Caco-2 (cell line): ENCODE measurements at regions of chr15 and their contacts with region 1.

Region 1: DNA sequence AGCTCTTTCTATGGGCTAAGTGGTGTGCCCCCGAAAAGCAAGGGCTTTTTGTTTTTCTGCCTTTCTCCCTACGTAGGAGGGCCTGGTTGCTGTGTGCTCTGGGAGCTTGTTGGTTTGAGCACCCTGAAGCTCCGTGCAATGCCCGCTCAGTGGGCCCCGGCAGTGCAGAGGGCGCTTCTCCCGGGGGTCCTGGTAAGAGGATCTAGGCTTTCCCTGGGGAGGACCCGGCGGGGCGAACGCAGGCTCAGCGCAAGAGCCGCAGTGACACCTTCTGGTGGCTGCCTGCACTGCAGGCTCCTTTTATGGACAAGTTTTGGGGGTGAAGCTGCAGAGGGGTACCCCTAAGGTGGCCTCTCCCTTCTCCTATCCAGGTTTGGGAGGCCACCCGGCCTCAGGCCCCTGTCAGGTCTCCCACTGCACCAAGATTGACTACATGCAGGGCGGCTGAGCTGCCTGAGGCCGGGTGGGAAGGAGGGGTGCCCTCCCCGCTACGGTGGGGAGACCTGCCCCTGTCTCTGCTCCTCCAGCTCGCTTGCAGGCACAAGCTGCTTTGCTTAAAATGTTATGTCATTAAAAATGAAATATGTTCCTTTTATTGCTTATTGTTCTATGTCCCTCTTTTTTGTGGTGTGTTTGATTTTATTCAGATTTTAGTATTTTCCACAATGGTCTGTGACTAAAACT is 387.9 kb downstream of the GABRG3 start:
- DNase-seq: peak in 1 of 2 experiments; percentile 11
- H3K4me3 ChIP-seq: no peak overlapping the region
- H3K4me3 Mint-ChIP-seq: no peak overlapping the region
- H3K27ac Mint-ChIP-seq: no peak overlapping the region
- H3K4me1 ChIP-seq: no peaks in the 10 kb centered on the region
- H3K4me1 Mint-ChIP-seq: no peaks in the 10 kb centered on the region
- H3K27me3 ChIP-seq: no peaks in the 10 kb centered on the region
- H3K27me3 Mint-ChIP-seq: no peaks in the 10 kb centered on the region
- CTCF ChIP-seq: peak; percentile 41 to 77

Region 2: DNA sequence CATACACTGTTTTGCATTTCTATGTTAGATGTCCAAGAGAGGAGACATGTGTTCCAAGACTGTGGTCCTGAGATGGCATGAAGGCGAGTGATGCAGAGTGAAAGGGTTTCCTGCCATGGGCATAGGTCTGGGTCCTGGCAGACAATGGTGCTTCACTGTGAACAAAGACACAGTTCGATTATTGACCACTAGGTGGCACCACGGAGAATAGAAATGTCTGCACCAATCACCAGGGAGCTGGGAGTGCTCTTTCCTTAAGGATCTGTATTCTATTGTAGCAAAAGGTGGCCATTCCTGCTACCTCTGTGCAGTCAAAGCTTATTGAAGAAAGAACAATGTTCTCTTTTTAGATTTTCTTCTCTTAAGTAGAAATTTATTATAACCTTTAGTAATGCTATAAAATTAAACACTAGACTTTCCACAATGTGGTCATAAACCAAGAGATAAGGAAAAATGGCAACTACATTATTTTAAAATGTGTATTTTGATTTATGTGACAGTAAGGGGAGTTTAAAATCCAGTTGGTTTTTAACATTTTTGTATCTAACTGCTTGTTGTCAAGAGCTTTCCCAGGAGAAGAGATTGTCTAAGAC is 299.2 kb before region 1 on chr15:
- CTCF ChIA-PET with region 1: no interaction called
- POLR2A ChIA-PET with region 1: no interaction called
- intact Hi-C with region 1: loop called (anchors 1 kb)
- DNase-seq: peak; percentile 57 to 74
- H3K4me3 ChIP-seq: no peak overlapping the region
- H3K4me3 Mint-ChIP-seq: no peak overlapping the region
- H3K27ac Mint-ChIP-seq: no peak overlapping the region
- H3K4me1 ChIP-seq: no peaks in the 10 kb centered on the region
- H3K4me1 Mint-ChIP-seq: no peaks in the 10 kb centered on the region
- H3K27me3 ChIP-seq: no peaks in the 10 kb centered on the region
- H3K27me3 Mint-ChIP-seq: peaks cover 2% of the 10 kb centered on the region
- CTCF ChIP-seq: peak; percentile 44 to 65

Region 3: DNA sequence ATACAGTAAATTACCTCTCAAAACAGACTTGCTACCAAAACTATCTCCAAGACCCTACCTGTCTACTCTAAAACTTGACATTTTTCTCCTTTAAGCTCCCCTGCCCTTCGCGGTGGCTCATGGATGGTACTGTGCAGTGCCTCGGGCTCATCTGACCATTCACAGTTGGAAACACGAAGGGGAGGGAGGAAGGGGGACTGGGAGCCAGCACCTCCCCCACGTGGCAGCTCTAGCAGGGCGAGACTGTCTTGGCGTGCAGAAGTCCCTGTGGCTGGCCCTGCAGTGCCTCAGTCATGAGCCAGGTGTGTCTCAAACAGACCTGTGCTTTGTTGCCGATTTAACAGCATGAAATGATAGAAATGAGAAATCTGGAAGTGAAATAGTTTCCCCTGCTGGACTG is 15.9 kb before region 1 on chr15:
- CTCF ChIA-PET with region 1: no interaction called
- POLR2A ChIA-PET with region 1: no interaction called
- intact Hi-C with region 1: no loop called
- DNase-seq: no peak
- H3K4me3 ChIP-seq: no peak overlapping the region
- H3K4me3 Mint-ChIP-seq: no peak overlapping the region
- H3K27ac Mint-ChIP-seq: no peak overlapping the region
- H3K4me1 ChIP-seq: no peaks in the 10 kb centered on the region
- H3K4me1 Mint-ChIP-seq: no peaks in the 10 kb centered on the region
- H3K27me3 ChIP-seq: no peaks in the 10 kb centered on the region
- H3K27me3 Mint-ChIP-seq: no peaks in the 10 kb centered on the region
- CTCF ChIP-seq: no peak